Posterior vena cava (tissue), 2 donors: ENCODE measurements at regions of chr10 and their contacts with region 1.

Region 1: GRCh38 chr10:22803261-22803885 is 89.0 kb upstream of the PIP4K2A start:
- DNase-seq: no peak

Region 2: GRCh38 chr10:22816298-22816653 is 12.9 kb after region 1 on chr10:
- intact Hi-C with region 1: loop called in 1 of 2 experiments (anchors 1 kb)
- DNase-seq: no peak